Gastrocnemius medialis (tissue), 4 donors: ENCODE measurements at regions of chr12 and their contacts with region 1.

Region 1: DNA sequence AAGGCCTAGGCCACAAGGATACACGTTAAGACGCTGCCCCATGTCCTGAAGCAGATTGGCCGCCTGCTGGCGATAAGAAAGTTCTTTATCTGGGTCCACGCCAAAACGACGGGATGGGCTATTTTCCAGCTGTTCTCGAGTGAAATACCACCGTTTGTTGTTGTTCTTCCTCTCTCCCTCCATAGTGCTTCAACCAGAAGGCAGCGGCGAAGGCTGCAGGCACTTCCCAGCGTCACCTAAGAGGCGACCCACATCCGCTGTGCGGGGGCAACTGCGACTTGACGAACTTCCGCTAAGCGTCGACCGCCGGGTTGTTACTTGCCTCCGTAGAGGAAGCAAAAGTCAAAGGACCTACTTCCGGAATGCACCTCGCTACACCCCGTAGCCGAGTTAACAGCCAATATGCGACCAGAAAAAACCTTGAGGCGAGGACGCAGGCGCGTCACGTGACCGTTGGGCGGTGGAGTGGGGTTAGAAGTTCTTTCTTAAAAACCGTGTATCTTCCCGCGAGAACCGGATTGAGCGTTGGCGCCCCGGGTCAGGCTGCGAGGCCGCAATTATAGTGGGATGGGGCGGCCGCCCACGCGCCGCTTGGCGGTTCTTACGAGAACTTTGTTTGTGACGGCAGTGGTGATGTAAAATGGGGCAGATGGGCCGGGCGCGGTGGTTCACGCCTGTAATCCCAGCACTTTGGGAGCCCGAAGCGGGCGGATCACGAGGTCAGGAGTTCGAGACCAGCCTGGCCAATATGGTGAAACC is at the start of gene CCNT1:
- DNase-seq: peak; percentile 98 to 100
- ATAC-seq: peak; percentile 98 to 99
- H3K4me3 ChIP-seq: peak within 1 kb of the TSS; percentile 76 to 89 (median 86)
- H3K27ac ChIP-seq: peak within 1 kb of the TSS; percentile 90 to 96 (median 92)
- H3K4me1 ChIP-seq: peaks cover 27 to 32% of the 10 kb centered on the region in 2 donors
- H3K27me3 ChIP-seq: no peaks in the 10 kb centered on the region
- CTCF ChIP-seq: peak; percentile 12 to 53 (median 48)
- POLR2A ChIP-seq: peak; percentile 77 to 84
- total RNA-seq, gene CCNT1: 18.0 to 21.4 (median 19.6) TPM

Region 2: GRCh38 chr12:48197971-48198671 is 518.6 kb before region 1 on chr12:
- in situ Hi-C with region 1: no loop called
- intact Hi-C with region 1: loop called (anchors 2 kb)
- DNase-seq: peak; percentile 98 to 99
- ATAC-seq: peak; percentile 92 to 96
- H3K4me3 ChIP-seq: peak overlapping the region; percentile 88 to 94 (median 92)
- H3K27ac ChIP-seq: peak overlapping the region; percentile 97 to 100 (median 99)
- H3K4me1 ChIP-seq: peaks cover 20% of the 10 kb centered on the region in 2 donors
- H3K27me3 ChIP-seq: no peaks in the 10 kb centered on the region
- CTCF ChIP-seq: no peak
- POLR2A ChIP-seq: peak; percentile 97 to 98

Region 3: GRCh38 chr12:48618541-48618940 is 98.1 kb before region 1 on chr12:
- in situ Hi-C with region 1: loop called in 1 of 4 experiments (anchors 25 kb)
- intact Hi-C with region 1: no loop called
- DNase-seq: peak; percentile 32 to 57
- ATAC-seq: peak; percentile 81 to 89
- H3K4me3 ChIP-seq: no peak overlapping the region
- H3K27ac ChIP-seq: no peak overlapping the region
- H3K4me1 ChIP-seq: no peaks in the 10 kb centered on the region
- H3K27me3 ChIP-seq: peaks cover 0 to 12% (median 3%) of the 10 kb centered on the region in 3 donors
- CTCF ChIP-seq: peak; percentile 77 to 96 (median 84)
- POLR2A ChIP-seq: no peak

Region 4: DNA sequence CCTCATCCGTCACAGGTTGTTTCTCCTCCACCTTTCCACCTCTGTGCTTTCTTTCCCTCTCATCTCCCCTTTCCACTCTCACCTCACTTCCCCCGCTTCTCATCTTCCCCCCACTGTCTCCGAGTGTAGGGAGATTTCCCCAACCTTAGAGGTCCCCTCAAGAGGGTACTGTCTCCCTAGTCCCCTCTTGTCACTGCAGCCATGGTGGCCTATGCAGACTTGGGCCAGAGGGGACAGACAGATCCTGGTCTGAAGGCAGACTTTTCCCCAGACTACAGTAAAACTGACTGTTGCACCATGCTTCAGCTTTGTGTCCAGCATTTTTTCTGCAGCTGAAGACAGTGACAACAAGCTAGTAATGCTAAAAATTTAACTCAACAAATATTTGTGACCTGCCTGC is 75.8 kb before region 1 on chr12:
- in situ Hi-C with region 1: no loop called
- intact Hi-C with region 1: no loop called
- DNase-seq: no peak
- ATAC-seq: peak in 1 of 2 donors; percentile 4
- H3K4me3 ChIP-seq: no peak overlapping the region
- H3K27ac ChIP-seq: no peak overlapping the region
- H3K4me1 ChIP-seq: no peaks in the 10 kb centered on the region
- H3K27me3 ChIP-seq: no peaks in the 10 kb centered on the region
- CTCF ChIP-seq: no peak
- POLR2A ChIP-seq: no peak

Region 5: DNA sequence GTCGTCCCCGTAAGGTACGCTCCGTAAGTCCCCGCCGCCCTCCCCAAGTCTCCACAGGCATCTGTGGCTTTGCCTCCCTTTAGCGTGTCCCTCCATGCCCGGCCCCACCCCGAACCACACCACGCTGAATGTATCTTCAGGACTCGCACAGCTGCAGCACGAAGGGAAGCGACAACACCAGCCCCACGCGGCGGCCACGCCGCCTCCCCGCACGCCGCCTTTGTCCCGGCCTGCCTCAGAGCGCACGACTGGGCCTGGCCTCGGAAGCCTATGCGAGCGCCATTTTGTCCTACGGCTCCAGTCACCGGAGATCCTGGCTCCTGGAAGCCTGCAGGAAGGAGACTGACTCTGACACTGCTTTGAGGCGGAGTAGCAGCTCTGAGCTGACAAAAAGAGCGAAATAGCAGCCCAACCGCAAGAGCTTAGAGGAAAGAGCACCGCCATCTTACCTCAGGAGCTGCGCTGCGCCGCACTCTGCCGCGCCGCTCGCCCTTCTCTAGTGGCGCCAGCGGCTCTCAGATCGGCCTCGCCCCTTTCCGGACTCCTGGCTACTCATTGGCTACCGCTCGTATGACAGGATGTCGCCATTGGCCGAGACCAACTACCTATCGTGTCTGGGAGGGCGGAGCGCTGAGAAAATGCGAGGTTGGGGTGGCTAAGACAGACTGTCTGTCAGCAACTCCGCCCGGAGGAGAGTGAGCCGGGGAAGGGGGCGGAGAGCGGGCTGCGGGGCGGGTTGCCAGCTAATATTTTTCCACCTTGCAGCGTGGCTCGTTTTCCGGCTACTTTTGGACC is 34.7 kb before region 1 on chr12 and contains the start of gene KANSL2:
- in situ Hi-C with region 1: no loop called
- intact Hi-C with region 1: loop called (anchors 2 kb)
- DNase-seq: peak; percentile 100
- ATAC-seq: peak; percentile 95 to 96
- H3K4me3 ChIP-seq: peak within 1 kb of the TSS; percentile 69 to 99 (median 90)
- H3K27ac ChIP-seq: peak within 1 kb of the TSS; percentile 88 to 99 (median 96)
- H3K4me1 ChIP-seq: peaks cover 42 to 46% of the 10 kb centered on the region in 2 donors
- H3K27me3 ChIP-seq: no peaks in the 10 kb centered on the region
- CTCF ChIP-seq: no peak
- POLR2A ChIP-seq: peak; percentile 99
- total RNA-seq, gene KANSL2: 69.0 to 107 (median 76.4) TPM

Region 6: DNA sequence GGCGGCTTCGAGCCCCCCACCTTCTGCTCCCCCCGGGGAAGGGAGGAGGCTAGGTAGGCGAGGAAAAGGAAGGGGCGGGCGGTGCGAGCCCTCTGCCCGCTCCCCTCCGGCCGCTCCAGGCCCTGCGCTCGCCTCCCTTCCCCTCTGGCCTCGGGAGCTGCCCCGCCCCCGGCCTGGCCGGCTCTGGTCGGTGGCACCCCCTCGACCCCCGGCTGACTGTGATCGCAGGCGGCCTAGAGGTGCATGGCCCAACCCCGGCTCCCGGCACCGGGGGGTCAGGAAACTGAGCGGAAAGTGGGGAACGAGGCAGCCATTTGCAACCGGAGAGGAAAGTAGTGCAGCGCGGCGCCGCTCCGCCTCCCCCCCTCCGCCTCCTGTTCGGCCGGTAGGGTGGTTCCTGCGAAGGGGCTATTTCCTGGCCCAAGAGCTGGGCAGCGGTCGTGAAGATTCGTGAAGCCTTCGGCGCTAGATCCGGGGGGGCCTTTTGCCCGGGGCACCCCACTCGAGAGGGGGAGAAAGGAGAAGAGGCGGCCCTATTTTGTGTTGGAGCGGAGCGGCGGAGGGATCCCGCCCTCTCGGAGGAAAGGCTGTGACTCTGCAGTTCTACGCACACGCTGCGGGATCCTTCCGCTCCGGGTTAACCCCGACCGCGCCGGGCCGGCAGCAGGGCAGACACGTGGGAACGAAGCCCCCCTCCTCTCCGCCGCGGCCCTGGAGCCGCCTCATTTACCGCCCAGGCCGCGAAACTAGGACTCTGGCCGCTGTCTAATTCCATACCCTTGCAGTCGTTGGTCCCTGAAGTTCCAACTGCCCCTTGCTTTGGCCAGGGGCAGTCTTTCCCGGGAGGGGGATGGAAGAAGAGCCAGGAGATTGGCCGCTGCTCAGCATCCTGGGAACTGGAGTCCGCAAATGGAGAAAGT is 343.8 kb after region 1 on chr12 and contains the start of gene KMT2D:
- in situ Hi-C with region 1: no loop called
- intact Hi-C with region 1: loop called (anchors 5 kb)
- DNase-seq: peak; percentile 83 to 89
- ATAC-seq: peak; percentile 79
- H3K4me3 ChIP-seq: peak within 1 kb of the TSS; percentile 83 to 100 (median 94)
- H3K27ac ChIP-seq: peak within 1 kb of the TSS; percentile 97 to 100 (median 99)
- H3K4me1 ChIP-seq: peaks cover 41 to 45% of the 10 kb centered on the region in 2 donors
- H3K27me3 ChIP-seq: no peaks in the 10 kb centered on the region
- CTCF ChIP-seq: peak; percentile 36 to 83 (median 63)
- POLR2A ChIP-seq: peak; percentile 69 to 76
- total RNA-seq, gene KMT2D: 36.0 to 99.0 (median 71.3) TPM